Activated CD4-positive, alpha-beta memory T cell treated with anti-CD3 and anti-CD28 coated beads, Interleukin-2, amount 10 ng/mL, durations not matched to agents 7 days and 5 days (primary cell): ENCODE measurements at regions of chr1 and their contacts with region 1.

Region 1: DNA sequence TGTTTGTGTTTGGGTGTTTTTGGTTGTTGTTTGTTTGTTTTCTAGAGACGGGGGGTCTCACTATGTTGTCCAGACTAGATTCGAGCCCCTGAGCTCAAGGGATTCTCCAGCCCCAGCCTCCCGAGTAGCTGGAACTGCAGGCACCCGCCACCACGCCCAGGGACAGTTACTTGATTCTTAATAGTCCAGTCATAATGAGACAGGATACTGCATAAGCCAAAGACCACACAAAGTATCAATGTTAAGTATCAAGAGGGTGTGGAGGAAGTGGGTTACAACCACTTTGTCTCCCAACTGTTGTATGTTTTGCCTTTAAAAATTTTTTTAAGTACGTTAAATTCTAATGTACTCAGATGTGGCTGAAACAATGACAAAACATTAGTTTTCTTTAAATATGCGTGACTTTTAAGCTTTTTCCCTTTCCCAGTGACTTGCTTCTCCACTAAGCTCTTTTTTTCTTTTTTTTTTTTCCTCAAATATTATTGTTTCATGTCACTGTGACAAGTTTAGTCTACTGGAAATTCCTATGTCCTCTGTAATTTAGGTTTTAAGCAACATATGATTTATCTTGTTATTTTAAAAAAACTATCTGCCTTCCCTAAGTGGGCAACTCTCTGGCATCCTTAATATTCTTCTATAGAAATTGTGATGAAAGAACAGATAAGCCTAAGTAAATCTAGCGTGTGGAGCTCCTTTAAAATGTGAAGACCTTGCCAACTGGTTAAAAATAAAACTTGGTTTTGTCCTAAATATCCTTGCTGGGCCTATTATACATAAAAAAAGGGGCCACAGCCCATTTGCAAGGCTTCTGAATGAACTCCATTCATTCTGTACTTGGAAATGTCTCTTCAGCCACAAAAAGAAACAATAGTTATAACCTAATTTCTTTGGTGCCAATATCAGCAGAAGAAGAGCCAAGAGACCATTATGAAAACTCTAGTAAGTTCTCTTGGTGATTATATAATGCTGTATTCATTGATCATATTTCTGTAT is 56.2 kb upstream of the DPH5 start:
- DNase-seq: peak; percentile 71
- H3K4me3 Mint-ChIP-seq: peak overlapping the region; percentile 33
- H3K27ac Mint-ChIP-seq: peak overlapping the region; percentile 96
- H3K4me1 Mint-ChIP-seq: peaks cover 50% of the 10 kb centered on the region
- H3K27me3 Mint-ChIP-seq: no peaks in the 10 kb centered on the region

Region 2: GRCh38 chr1:101112051-101112780 is 30.4 kb after region 1 on chr1:
- CTCF ChIA-PET with region 1: interaction called, 3 read pairs
- POLR2A ChIA-PET with region 1: interaction called, 13 read pairs
- DNase-seq: peak; percentile 78
- H3K4me3 Mint-ChIP-seq: no peak overlapping the region
- H3K27ac Mint-ChIP-seq: peak overlapping the region; percentile 94
- H3K4me1 Mint-ChIP-seq: peaks cover 52% of the 10 kb centered on the region
- H3K27me3 Mint-ChIP-seq: no peaks in the 10 kb centered on the region

Region 3: GRCh38 chr1:101122452-101123166 is 40.8 kb after region 1 on chr1:
- CTCF ChIA-PET with region 1: interaction called, 7 read pairs
- POLR2A ChIA-PET with region 1: interaction called, 25 read pairs
- DNase-seq: peak; percentile 34
- H3K4me3 Mint-ChIP-seq: peak overlapping the region; percentile 33
- H3K27ac Mint-ChIP-seq: peak overlapping the region; percentile 80
- H3K4me1 Mint-ChIP-seq: peaks cover 60% of the 10 kb centered on the region
- H3K27me3 Mint-ChIP-seq: peaks cover 4% of the 10 kb centered on the region

Region 4: DNA sequence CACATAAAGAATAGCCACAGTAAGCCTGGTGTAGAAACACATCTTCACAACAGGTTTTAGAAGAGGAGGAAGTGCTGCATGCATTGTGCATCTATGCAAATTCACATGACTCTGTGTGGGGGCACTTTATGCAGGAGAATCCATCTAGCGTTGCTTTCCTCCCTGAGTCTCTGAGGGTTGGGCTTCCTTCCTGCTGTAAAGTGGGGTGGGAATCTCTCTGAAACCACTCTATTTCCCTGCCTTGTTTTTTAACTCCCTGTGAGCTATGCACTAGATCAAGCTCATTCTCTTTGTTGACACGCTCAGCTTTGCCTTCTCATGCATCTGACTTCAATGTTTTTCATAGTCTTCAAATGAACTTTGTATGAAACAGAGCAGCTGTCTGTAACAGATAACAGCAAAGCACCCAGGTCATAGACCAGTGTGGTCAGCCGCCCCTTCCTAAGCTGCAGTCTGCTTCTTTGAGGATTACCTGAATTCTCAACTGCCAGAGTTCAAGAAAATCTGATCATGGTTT is 46.5 kb after region 1 on chr1:
- CTCF ChIA-PET with region 1: no interaction called
- POLR2A ChIA-PET with region 1: interaction called, 25 read pairs
- DNase-seq: peak; percentile 18
- H3K4me3 Mint-ChIP-seq: peak overlapping the region; percentile 52
- H3K27ac Mint-ChIP-seq: peak overlapping the region; percentile 79
- H3K4me1 Mint-ChIP-seq: peaks cover 65% of the 10 kb centered on the region
- H3K27me3 Mint-ChIP-seq: peaks cover 4% of the 10 kb centered on the region

Region 5: DNA sequence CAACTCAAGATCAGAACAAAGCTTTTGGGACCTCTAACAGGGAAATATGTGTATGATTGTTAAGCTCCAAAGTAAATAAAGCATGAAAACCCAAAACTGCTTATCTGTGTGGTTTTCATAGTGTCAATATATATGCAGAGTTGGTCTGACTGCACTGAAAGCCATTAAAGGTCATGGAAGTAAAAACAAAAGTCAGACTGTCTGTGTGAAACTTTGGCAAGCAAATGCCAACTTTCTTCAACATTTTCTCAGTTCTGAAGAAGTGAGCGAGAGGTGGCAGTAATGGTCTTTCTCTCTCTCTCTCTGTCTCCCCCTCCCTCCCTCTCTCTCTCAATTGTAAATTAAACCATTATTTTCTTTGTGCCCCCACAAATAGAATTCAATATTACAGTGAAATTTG is 54.9 kb after region 1 on chr1:
- CTCF ChIA-PET with region 1: no interaction called
- POLR2A ChIA-PET with region 1: interaction called, 10 read pairs
- DNase-seq: peak; percentile 26
- H3K4me3 Mint-ChIP-seq: no peak overlapping the region
- H3K27ac Mint-ChIP-seq: peak overlapping the region; percentile 64
- H3K4me1 Mint-ChIP-seq: peaks cover 58% of the 10 kb centered on the region
- H3K27me3 Mint-ChIP-seq: no peaks in the 10 kb centered on the region